ENCODE measurements at regions of chr1 and their contacts with region 1.

Region 1: DNA sequence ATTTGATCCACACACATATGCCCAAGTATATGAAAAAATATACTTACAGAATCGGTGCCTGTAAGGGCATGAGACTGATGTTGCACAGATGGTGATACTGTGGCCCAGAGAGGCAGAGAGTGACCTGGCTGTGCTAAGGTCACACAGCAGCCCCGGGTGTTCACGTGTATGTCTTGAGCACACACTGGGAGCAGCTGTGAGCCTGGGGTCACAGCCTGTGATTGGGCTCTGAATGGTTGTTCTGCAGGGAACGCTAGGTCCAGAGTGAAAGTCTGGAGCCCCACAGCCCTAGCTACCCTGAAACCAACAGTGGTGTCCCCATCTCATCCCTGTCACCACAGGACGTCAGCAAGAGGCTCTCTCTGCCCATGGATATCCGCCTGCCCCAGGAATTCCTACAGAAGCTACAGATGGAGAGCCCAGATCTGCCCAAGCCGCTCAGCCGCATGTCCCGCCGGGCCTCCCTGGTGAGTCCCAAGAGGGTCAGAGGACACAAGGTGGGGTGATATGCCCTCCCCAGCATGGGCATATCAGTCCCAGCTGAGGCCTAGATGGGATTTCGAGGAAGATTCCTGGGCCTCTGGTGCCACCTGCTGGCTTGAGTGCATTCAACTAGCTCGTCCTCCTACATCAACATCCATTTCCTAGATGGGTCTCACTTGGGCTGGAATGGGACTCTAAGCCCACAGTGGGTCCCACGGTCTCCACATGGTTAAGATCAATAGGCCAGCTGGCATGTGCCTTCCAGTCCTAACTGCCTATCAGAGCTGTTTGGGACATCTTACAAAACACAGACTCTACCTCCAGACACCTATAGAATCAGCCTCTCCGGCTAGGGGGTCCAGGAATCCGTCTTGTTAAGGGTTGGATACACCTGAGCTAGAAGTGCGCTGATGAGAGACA is 19.7 kb downstream of the CDK18 start:
- DNase-seq: peak; percentile 62
- H3K4me3 ChIP-seq: no peak overlapping the region
- H3K27ac ChIP-seq: no peak overlapping the region
- H3K4me1 ChIP-seq: no peaks in the 10 kb centered on the region
- H3K27me3 ChIP-seq: peaks cover 0 to 4% of the 10 kb centered on the region in 2 experiments
- CTCF ChIP-seq: peak; percentile 70 to 80
- POLR2A ChIP-seq: no peak

Region 2: DNA sequence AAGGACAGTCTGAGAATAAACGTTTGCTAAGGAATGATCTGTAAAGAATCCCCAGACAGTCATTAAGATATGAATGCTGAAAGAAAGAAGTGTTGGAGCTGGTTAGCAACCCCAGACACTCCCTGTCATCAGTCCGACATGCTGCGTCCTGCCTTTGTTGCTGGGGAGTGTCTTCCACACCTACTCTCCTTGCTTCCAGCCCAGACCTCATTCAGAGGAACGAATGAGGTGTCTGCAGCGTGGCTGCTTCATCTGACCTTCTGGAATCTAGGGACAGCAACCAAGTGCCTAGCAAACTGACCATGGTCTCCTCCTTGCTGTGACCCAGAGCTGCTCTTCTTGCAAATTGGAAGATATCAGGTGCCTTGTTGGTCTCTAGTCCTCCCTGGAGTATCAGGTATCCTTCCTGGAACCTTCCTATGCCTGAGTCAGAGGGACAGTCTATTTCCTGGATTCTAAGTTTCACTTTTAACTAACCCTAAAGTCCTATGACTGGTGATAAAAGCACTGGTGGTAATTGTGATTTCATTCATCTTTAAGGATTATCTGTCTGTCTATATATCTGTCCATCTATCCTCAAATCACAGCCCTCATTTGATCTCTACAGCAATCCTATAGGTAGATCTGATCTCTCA is 608.2 kb before region 1 on chr1:
- CTCF ChIA-PET with region 1: no interaction called
- POLR2A ChIA-PET with region 1: no interaction called
- dilution Hi-C with region 1: no loop called
- intact Hi-C with region 1: no loop called
- DNase-seq: no peak
- H3K4me3 ChIP-seq: no peak overlapping the region
- H3K27ac ChIP-seq: no peak overlapping the region
- H3K4me1 ChIP-seq: no peaks in the 10 kb centered on the region
- H3K27me3 ChIP-seq: no peaks in the 10 kb centered on the region
- CTCF ChIP-seq: no peak
- POLR2A ChIP-seq: no peak

Region 3: DNA sequence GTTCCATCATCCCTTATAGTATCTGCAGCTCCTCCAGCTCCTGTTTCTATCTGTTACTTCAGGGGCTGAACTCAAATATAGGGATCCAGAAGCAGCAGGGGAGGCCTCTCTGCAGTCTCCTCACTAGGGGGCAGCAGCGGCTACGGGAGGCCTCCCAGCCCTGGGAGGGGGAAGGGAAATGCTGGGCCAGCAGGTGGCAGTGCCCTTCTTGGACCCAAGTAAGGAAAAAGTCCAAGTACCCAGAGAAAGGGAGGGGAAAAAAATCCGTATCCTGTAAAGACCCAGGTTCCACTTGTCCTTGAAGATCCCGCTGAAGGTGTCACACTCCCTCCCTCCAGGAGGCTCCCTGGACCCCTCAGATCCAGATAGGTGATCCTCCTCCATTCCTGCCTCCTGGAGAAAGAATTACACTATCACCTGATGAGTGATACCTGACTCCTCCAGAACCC is 188.5 kb before region 1 on chr1:
- CTCF ChIA-PET with region 1: interaction called, 110 read pairs
- POLR2A ChIA-PET with region 1: no interaction called
- dilution Hi-C with region 1: no loop called
- intact Hi-C with region 1: loop called (anchors 1 kb)
- DNase-seq: peak; percentile 85
- H3K4me3 ChIP-seq: no peak overlapping the region
- H3K27ac ChIP-seq: no peak overlapping the region
- H3K4me1 ChIP-seq: no peaks in the 10 kb centered on the region
- H3K27me3 ChIP-seq: peaks cover 8 to 14% of the 10 kb centered on the region in 2 experiments
- CTCF ChIP-seq: peak; percentile 97
- POLR2A ChIP-seq: no peak

Region 4: GRCh38 chr1:205396967-205397616 is 127.0 kb before region 1 on chr1:
- CTCF ChIA-PET with region 1: interaction called, 62 read pairs
- POLR2A ChIA-PET with region 1: no interaction called
- dilution Hi-C with region 1: no loop called
- intact Hi-C with region 1: loop called (anchors 1 kb)
- DNase-seq: peak; percentile 35
- H3K4me3 ChIP-seq: no peak overlapping the region
- H3K27ac ChIP-seq: no peak overlapping the region
- H3K4me1 ChIP-seq: no peaks in the 10 kb centered on the region
- H3K27me3 ChIP-seq: peaks cover 8 to 19% of the 10 kb centered on the region in 2 experiments
- CTCF ChIP-seq: peak; percentile 52 to 54
- POLR2A ChIP-seq: no peak

Region 5: GRCh38 chr1:205493241-205494085 is 30.7 kb before region 1 on chr1:
- CTCF ChIA-PET with region 1: interaction called, 360 read pairs
- POLR2A ChIA-PET with region 1: no interaction called
- dilution Hi-C with region 1: no loop called
- intact Hi-C with region 1: loop called (anchors 1 kb)
- DNase-seq: no peak
- H3K4me3 ChIP-seq: no peak overlapping the region
- H3K27ac ChIP-seq: no peak overlapping the region
- H3K4me1 ChIP-seq: no peaks in the 10 kb centered on the region
- H3K27me3 ChIP-seq: peaks cover 12 to 21% of the 10 kb centered on the region in 2 experiments
- CTCF ChIP-seq: no peak
- POLR2A ChIP-seq: no peak

Region 6: GRCh38 chr1:205543411-205544301 is 19.5 kb after region 1 on chr1:
- CTCF ChIA-PET with region 1: interaction called, 43 read pairs
- POLR2A ChIA-PET with region 1: no interaction called
- dilution Hi-C with region 1: no loop called
- intact Hi-C with region 1: no loop called
- DNase-seq: peak; percentile 95
- H3K4me3 ChIP-seq: peak overlapping the region in 2 of 3 experiments; percentile 32 to 39
- H3K27ac ChIP-seq: peak overlapping the region; percentile 98
- H3K4me1 ChIP-seq: peaks cover 9% of the 10 kb centered on the region
- H3K27me3 ChIP-seq: peaks cover 2 to 5% of the 10 kb centered on the region in 2 experiments
- CTCF ChIP-seq: peak in 1 of 2 donors; percentile 5
- POLR2A ChIP-seq: no peak

Region 7: GRCh38 chr1:205711104-205712020 is 187.2 kb after region 1 on chr1:
- CTCF ChIA-PET with region 1: interaction called, 19 read pairs
- POLR2A ChIA-PET with region 1: no interaction called
- dilution Hi-C with region 1: no loop called
- intact Hi-C with region 1: no loop called
- DNase-seq: peak; percentile 88
- H3K4me3 ChIP-seq: no peak overlapping the region
- H3K27ac ChIP-seq: peak overlapping the region; percentile 44
- H3K4me1 ChIP-seq: peaks cover 12% of the 10 kb centered on the region
- H3K27me3 ChIP-seq: no peaks in the 10 kb centered on the region
- CTCF ChIP-seq: peak; percentile 67 to 70
- POLR2A ChIP-seq: no peak

Region 8: DNA sequence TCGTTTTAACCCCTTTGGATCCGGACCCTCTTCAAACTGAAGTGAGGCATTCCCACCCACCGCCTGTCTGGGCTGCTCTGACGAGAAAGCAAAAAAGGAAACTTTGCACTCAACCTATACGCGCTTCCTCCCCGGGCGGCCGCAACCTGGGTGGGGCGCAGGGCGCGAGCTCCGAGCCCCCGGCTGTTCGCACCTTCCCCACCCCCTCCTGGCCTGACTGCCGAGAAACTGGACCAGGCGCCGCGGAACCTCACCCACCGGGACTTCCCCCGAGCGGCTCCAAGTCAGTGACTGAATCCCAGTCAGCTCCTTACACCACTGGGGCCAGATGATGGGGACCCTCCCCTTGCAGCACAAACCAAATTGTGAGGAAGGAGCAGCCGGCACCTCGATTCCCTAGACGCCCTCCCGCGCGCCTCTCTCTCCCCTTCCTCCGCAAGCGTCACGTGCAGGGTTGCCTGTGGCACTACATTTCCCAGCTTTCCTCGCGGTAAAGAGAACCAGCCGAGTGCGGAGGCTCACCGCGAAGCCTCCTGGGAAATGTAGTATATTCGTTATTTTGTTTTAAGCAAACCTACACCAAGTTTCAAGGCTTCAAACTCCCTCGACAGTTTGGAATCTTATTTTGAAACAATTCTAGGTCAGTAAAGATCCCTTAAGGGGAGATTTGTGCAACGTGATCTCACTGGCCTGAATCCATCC is 251.0 kb after region 1 on chr1 and contains the start of gene RAB29:
- CTCF ChIA-PET with region 1: no interaction called
- POLR2A ChIA-PET with region 1: no interaction called
- dilution Hi-C with region 1: no loop called
- intact Hi-C with region 1: no loop called
- DNase-seq: peak; percentile 89
- H3K4me3 ChIP-seq: peak within 1 kb of the TSS; percentile 55 to 88 (median 59)
- H3K27ac ChIP-seq: peak within 1 kb of the TSS; percentile 1
- H3K4me1 ChIP-seq: peaks cover 8% of the 10 kb centered on the region
- H3K27me3 ChIP-seq: no peaks in the 10 kb centered on the region
- CTCF ChIP-seq: no peak
- POLR2A ChIP-seq: peak; percentile 49
- total RNA-seq, gene RAB29: 18.8 and 23.0 TPM in 2 replicates

Measured in endothelial cell of umbilical vein (primary cell).